CD8-positive, alpha-beta memory T cell (primary cell): ENCODE measurements at regions of chr6 and their contacts with region 1.

Region 1: DNA sequence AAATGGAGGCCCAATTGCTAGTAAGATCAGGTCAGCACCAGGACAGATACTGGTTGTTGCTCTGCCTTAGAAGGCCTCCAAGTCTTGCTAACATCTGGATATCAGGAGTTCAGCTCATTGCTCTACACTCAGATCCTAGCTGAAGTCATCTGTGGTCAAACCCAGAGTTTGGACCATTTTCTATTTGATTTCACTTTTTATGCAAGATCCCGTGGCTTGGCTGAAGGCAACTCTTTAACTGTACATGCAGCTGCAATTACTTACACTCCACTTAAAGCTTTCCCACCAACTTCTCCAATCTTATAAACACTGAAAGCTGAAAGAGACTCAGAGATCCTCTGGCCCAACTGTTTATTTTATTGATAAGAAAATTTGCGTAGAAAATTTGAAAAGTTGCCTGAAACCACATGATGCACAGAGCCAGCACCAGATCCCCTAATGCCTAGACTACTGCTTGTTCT is 2.7 kb downstream of the SLC17A2 start:
- DNase-seq: no peak
- H3K4me3 ChIP-seq: no peak overlapping the region
- H3K4me3 Mint-ChIP-seq: no peak overlapping the region
- H3K27ac ChIP-seq: no peak overlapping the region
- H3K27ac Mint-ChIP-seq: no peak overlapping the region
- H3K4me1 ChIP-seq: no peaks in the 10 kb centered on the region
- H3K4me1 Mint-ChIP-seq: no peaks in the 10 kb centered on the region
- H3K27me3 ChIP-seq: no peaks in the 10 kb centered on the region
- H3K27me3 Mint-ChIP-seq: peaks cover 0 to 11% of the 10 kb centered on the region in 2 donors

Region 2: DNA sequence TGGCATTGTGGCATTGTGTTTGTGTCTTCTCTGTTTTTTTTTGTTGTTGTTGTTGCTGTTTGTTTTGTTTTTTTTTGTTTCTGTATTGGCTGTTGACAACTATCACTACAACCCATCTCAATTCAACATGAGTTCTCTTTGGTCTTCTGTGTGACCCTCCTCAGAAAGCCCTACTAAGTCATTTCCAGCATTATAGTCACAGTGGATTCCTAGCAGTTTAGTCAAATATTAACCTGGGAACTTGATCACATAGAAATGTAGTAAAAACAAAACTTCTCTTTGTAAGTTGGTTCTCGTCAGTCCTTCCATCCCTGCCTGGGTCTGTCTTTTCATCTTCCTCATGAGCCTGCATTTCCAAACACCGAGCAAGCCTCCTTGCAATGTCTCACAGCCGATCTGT is 14.0 kb before region 1 on chr6:
- CTCF ChIA-PET with region 1: no interaction called
- POLR2A ChIA-PET with region 1: interaction called, 11 read pairs
- DNase-seq: no peak
- H3K4me3 ChIP-seq: no peak overlapping the region
- H3K4me3 Mint-ChIP-seq: no peak overlapping the region
- H3K27ac ChIP-seq: no peak overlapping the region
- H3K27ac Mint-ChIP-seq: no peak overlapping the region
- H3K4me1 ChIP-seq: no peaks in the 10 kb centered on the region
- H3K4me1 Mint-ChIP-seq: no peaks in the 10 kb centered on the region
- H3K27me3 ChIP-seq: no peaks in the 10 kb centered on the region
- H3K27me3 Mint-ChIP-seq: peaks cover 6 to 21% of the 10 kb centered on the region in 2 donors

Region 3: DNA sequence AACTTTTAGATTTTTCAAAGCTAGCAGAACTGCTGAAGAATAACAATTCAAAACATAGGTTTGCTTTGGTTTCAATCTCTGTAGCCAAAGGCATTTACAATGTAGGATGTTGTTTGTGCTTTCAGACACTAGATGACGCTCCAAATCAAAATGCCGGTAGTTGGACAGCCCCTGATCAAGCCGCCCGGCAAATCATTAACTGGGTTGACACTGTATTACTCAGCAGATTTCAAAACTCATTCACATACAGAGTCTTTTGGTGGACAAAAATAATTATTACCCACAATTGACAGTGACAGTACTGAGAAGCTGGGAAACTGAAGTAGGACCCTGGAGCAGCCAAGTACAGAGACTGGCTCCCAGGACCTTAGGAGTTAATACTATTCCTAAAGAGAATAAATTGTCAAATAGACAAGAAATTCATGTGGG is 138.2 kb after region 1 on chr6:
- CTCF ChIA-PET with region 1: no interaction called
- POLR2A ChIA-PET with region 1: no interaction called
- DNase-seq: peak in 4 of 5 donors; percentile 32 to 67 (median 62)
- H3K4me3 ChIP-seq: no peak overlapping the region
- H3K4me3 Mint-ChIP-seq: no peak overlapping the region
- H3K27ac ChIP-seq: no peak overlapping the region
- H3K27ac Mint-ChIP-seq: no peak overlapping the region
- H3K4me1 ChIP-seq: no peaks in the 10 kb centered on the region
- H3K4me1 Mint-ChIP-seq: peaks cover 4 to 11% (median 6%) of the 10 kb centered on the region in 3 donors
- H3K27me3 ChIP-seq: no peaks in the 10 kb centered on the region
- H3K27me3 Mint-ChIP-seq: no peaks in the 10 kb centered on the region